ENCODE measurements at regions of chr21 and their contacts with region 1.

Region 1: DNA sequence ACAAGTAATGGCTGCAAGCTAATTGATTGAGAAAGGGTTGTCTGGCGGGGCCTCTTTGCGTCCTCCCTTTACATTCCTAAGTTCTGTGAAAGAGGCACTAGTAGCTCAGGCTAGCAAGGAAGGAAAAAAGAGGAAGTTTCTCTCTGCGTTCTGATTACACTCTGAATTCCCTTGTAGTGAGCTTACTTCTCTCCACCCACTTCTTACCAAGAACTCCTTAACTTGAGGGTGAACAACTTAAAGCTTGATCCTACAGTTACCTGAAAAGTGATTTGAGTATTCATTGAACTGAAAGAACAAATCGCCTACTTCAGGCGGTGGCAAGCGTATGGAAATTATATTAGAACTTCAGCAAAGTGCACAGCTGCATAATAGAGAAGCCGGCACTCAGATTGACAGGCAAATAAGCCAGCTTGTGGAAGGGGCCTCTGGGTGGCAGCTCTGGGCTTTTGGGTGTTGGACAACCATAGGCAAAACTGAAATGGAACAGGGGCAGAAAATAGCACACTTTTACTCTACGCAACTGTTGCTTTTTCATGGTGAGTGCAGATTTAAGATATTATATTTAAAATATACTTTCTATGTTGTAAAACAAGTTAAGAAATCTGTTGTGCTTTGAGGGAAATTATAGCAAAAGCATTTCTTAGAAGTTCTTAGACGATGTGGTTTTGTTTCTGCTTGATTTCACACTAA is 464.5 kb downstream of the USP25 start:
- DNase-seq: peak; percentile 85 to 92 (median 86)
- H3K4me3 ChIP-seq: peak overlapping the region in 6 of 7 experiments; percentile 60 to 91 (median 79)
- H3K27ac ChIP-seq: peak overlapping the region; percentile 74 to 85
- H3K4me1 ChIP-seq: peaks cover 9 to 32% (median 21%) of the 10 kb centered on the region in 4 experiments
- H3K27me3 ChIP-seq: no peaks in the 10 kb centered on the region

Region 2: DNA sequence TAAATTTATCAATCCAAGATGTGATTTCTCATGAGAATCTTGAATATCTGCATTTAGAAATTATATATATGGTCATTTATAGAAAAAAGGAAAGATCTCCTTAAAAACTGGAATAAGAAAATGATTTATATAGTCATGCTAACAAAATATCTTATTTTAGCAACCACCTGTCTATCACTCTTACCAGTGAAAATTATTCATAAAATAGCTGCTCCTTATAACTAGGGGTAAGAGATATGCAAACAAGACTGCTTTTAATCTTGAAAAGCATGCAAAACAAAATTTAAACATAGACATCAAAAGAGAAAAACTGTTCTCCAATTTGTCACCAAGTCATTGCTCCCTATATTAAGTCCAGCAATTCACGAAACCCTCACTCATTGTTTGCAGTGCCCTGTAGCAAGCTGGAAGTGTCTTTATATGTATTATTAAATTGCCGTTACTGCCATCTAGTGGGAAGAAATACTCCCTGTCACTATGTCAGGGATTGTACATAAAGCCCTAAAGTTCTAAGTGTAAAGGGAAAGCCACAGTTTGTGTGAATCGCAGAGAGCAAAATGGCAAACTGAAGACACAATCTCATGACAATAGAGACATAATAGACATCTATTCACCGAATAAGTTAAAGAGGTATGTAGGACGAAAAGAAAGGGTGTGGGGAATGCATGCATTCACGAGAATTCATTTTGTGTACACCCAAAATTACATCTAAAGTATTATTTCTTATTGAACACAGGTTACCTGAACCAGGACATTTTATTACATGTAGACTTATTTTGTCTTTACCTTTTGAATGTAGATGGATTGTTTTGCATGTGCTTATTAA is 136.1 kb after region 1 on chr21:
- CTCF ChIA-PET with region 1: interaction called, 27 read pairs
- POLR2A ChIA-PET with region 1: no interaction called
- DNase-seq: peak; percentile 77 to 87 (median 85)
- H3K4me3 ChIP-seq: no peak overlapping the region
- H3K27ac ChIP-seq: no peak overlapping the region
- H3K4me1 ChIP-seq: peaks cover 0 to 2% (median under 1%) of the 10 kb centered on the region in 4 experiments
- H3K27me3 ChIP-seq: no peaks in the 10 kb centered on the region